Adrenal gland (tissue), 19 donors: ENCODE measurements at regions of chr4 and their contacts with region 1.

Region 1: DNA sequence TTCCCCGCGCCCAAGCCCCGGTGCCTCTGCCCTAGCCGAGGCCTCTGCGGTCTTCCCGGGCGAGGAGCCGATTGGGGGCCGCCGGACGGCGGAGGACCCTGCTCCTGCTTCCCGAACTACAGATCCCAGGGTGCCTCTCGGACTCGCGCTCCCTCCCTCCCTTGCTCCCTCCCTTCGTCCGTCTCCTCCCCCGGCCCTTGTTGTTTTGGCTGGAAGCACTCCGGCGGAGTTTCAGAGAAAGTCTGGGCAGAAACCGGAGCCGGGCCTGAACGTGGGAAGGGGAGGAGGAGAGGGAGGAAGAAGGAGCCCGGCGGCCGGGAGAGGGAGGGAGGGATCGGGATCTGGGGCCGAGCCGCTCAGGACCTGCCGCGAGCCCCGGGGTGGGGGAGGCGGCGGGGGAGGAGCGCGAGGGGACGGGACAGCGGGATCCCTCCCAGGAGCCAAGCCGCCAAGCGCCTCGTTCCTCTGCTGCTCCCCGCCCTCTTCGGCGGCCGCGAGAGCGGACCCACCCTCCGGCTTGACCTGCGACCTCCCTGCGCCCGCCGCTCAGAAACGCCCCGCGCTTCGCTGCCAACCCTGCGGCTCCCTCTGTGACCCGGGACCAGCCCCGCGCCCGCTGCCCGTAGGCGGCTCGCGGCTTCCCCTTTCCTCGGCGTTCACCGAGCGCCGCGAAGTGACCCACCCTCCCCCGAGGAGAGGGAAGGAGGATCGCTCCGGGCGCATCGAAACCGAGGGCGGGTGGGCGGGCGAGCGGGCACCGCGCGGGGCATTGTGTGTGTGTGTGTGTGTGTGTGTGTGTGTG is 496 bp upstream of the GAB1 start:
- DNase-seq: peak; percentile 85 to 92 (median 89)
- H3K4me3 ChIP-seq: peak overlapping the region; percentile 68 to 98 (median 69)
- H3K27ac ChIP-seq: peak overlapping the region; percentile 80 to 98 (median 84)
- H3K4me1 ChIP-seq: peaks cover 9 to 26% of the 10 kb centered on the region in 2 donors
- H3K27me3 ChIP-seq: no peaks in the 10 kb centered on the region
- CTCF ChIP-seq: no peak
- POLR2A ChIP-seq: peak in 1 of 2 donors; percentile 69

Region 2: GRCh38 chr4:143195581-143195980 is 140.6 kb before region 1 on chr4:
- intact Hi-C with region 1: loop called (anchors 10 kb)
- DNase-seq: no peak
- H3K4me3 ChIP-seq: no peak overlapping the region
- H3K27ac ChIP-seq: no peak overlapping the region
- H3K4me1 ChIP-seq: peaks cover 6 to 28% of the 10 kb centered on the region in 2 donors
- H3K27me3 ChIP-seq: no peaks in the 10 kb centered on the region
- CTCF ChIP-seq: no peak
- POLR2A ChIP-seq: no peak

Region 3: DNA sequence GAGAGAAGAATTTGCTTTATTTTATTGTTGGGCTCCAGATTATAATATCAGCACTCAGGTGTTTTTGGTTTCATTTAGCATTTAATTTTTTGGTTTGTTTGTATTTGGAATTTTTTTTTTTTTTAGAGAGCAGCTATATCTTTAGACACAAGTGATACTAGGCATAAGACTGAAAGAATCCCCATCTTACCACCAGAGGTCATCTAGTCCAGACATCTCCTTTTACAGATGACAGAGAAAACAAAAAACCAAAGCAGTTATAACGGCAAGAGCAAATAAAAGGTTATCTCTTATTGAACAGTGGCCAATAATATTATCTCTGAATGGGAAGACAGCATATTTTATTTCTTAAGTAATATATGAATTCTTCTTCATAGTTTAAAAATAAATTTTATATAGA is 128.6 kb before region 1 on chr4:
- intact Hi-C with region 1: loop called in 1 of 2 experiments (anchors 10 kb)
- DNase-seq: no peak
- H3K4me3 ChIP-seq: no peak overlapping the region
- H3K27ac ChIP-seq: no peak overlapping the region
- H3K4me1 ChIP-seq: peaks cover 0 to 5% of the 10 kb centered on the region in 2 donors
- H3K27me3 ChIP-seq: no peaks in the 10 kb centered on the region
- CTCF ChIP-seq: peak; percentile 18 to 62 (median 46)
- POLR2A ChIP-seq: no peak

Region 4: GRCh38 chr4:143399113-143399949 is 63.2 kb after region 1 on chr4:
- intact Hi-C with region 1: loop called in 1 of 2 experiments (anchors 10 kb)
- DNase-seq: no peak
- H3K4me3 ChIP-seq: no peak overlapping the region
- H3K27ac ChIP-seq: no peak overlapping the region
- H3K4me1 ChIP-seq: peaks cover 13 to 39% of the 10 kb centered on the region in 2 donors
- H3K27me3 ChIP-seq: no peaks in the 10 kb centered on the region
- CTCF ChIP-seq: peak; percentile 48 to 69 (median 56)
- POLR2A ChIP-seq: no peak

Region 5: DNA sequence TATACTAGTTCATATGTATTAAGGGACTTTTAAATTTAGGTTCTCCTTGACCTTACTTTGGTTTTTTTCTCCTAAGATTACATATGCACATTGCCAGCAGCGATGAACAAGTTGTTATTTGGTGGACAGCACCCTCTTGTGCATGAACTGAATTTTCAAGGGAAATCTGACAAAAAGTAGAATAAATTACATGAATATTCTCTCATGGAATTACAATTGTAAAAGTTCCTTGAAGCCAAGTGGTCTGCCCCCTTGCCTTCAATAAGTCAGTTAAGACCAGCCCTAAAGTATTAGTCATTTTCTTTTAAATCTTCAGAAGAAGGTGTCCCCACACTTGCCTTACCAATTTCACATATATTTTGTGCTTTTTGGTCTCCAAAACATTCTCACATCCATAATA is 146.7 kb after region 1 on chr4:
- intact Hi-C with region 1: loop called in 1 of 2 experiments (anchors 5 kb)
- DNase-seq: peak; percentile 14 to 62 (median 31)
- H3K4me3 ChIP-seq: no peak overlapping the region
- H3K27ac ChIP-seq: no peak overlapping the region
- H3K4me1 ChIP-seq: no peaks in the 10 kb centered on the region
- H3K27me3 ChIP-seq: no peaks in the 10 kb centered on the region
- CTCF ChIP-seq: peak; percentile 31 to 84 (median 69)
- POLR2A ChIP-seq: no peak